Activated CD4-positive, alpha-beta T cell treated with anti-CD3 and anti-CD28 coated beads, Interleukin-2, amount 10 ng/mL, durations not matched to agents 24 days and 14 days (primary cell): ENCODE measurements at regions of chr12 and their contacts with region 1.

Region 1: GRCh38 chr12:104930388-104931326 is 27.4 kb downstream of the SLC41A2 start:
- DNase-seq: peak; percentile 79
- H3K4me3 Mint-ChIP-seq: peak overlapping the region; percentile 39
- H3K27ac Mint-ChIP-seq: peak overlapping the region; percentile 87
- H3K4me1 Mint-ChIP-seq: peaks cover 41% of the 10 kb centered on the region
- H3K27me3 Mint-ChIP-seq: no peaks in the 10 kb centered on the region

Region 2: GRCh38 chr12:104720339-104721038 is 210.2 kb before region 1 on chr12:
- intact Hi-C with region 1: no loop called
- DNase-seq: peak; percentile 93
- H3K4me3 Mint-ChIP-seq: peak overlapping the region; percentile 76
- H3K27ac Mint-ChIP-seq: peak overlapping the region; percentile 89
- H3K4me1 Mint-ChIP-seq: peaks cover 60% of the 10 kb centered on the region
- H3K27me3 Mint-ChIP-seq: no peaks in the 10 kb centered on the region

Region 3: DNA sequence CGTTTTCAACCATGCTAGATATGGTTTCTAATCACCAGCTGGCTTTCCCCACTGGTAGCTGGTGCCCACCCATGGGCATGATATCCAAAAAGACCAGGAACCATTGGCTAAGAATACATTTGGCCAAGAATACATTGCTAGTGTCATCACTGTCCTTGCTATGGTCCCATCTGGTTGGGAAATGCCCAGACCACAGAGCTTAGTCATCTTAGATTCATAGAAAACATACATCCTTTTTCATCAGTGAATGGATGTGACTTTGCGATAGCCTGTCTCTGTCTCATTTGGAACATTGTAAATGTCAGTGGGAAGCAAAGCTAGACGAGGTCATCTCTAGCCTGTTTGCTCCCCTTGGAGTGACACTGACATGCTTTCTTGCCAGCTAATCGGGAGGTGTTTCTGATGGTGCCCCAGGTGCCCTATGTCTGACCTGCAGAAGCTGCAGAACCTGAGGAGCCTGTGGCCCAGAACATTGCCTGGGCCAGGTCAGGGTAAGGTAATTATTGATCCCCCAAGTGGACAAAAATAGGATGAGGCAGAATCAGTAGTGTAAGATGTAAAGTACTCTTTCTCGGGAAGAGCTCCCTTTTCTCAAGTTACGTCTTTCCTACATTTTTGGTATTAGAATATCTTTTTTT is 167.4 kb before region 1 on chr12:
- intact Hi-C with region 1: loop called (anchors 5 kb)
- DNase-seq: peak; percentile 73
- H3K4me3 Mint-ChIP-seq: peak overlapping the region; percentile 66
- H3K27ac Mint-ChIP-seq: peak overlapping the region; percentile 77
- H3K4me1 Mint-ChIP-seq: peaks cover 43% of the 10 kb centered on the region
- H3K27me3 Mint-ChIP-seq: no peaks in the 10 kb centered on the region

Region 4: DNA sequence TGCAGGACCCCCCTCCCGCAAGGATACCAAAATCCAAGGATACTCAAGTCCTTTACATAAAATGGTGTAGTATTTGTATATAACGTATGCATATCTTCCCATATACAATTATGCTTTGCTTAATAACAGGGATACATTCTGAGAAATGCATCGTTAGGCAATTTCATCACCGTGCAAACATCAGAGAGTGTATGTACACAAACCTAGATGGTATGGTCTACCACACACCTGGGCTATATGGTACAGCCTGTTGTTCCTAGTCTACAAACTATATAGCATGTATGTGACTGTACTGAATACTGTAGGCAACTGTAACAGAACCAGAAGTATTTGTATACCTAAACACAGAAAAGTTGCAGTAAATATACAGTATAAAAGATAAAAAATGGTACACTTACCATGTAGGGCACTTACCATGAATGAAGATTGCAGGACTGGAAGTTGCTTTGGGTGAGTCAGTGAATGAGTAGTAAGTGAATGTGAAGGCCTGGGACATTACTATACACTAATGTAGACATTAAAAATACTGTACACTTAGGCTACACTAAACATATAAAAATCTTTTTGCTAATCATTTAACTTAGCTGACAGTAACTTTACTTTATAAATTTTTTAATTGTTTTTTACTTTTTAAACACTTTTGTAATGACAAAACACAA is 113.7 kb before region 1 on chr12:
- intact Hi-C with region 1: no loop called
- DNase-seq: no peak
- H3K4me3 Mint-ChIP-seq: no peak overlapping the region
- H3K27ac Mint-ChIP-seq: no peak overlapping the region
- H3K4me1 Mint-ChIP-seq: no peaks in the 10 kb centered on the region
- H3K27me3 Mint-ChIP-seq: peaks cover 3% of the 10 kb centered on the region

Region 5: DNA sequence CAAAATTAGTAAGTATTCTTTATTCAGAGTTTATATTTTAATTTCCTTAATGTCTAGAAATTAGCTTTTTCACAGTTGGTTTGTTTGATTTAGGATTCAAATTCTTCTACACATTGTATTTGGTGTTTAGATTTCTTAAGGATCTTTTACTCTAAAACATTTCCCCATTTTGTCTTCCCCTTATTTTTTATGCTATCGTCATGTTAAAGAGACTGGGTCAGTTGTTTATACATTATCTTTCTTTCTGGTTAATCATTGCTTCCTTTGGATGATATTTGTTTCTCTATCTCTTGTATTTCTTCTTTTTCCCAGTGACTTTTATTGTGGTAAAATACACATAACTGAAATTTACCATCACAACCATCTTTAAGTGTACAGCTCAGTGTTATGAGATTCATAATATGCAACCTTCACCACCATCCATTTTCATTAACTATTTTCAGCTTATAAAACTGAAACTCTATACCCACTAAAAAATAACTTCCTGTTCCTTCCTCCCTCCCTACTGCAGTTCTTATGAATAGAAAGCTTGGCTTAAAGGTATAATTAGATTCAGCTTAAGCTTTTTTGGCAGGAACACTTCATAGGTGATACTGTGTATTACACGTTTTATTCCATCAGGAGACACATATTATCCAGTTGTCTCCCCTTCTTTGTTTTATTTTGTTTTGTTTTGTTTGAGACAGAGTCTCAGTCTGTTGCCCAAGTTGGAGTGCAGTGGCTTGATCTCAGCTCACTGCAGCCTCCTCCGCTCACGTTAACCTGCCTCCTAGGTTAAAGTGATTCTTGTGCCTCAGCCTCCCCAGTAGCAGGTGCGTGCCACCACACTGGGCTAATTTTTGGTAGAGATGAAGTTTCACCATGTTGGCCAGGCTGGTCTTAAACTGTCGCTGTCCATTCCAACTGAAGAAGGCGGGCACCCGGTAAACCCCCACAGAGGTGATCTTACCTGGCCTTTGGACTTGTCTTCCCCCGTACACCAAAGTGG is 100.5 kb after region 1 on chr12:
- intact Hi-C with region 1: no loop called
- DNase-seq: no peak
- H3K4me3 Mint-ChIP-seq: peak overlapping the region; percentile 22
- H3K27ac Mint-ChIP-seq: peak overlapping the region; percentile 73
- H3K4me1 Mint-ChIP-seq: peaks cover 29% of the 10 kb centered on the region
- H3K27me3 Mint-ChIP-seq: no peaks in the 10 kb centered on the region